Transverse colon (tissue), 4 donors: ENCODE measurements at regions of chr1 and their contacts with region 1.

Region 1: GRCh38 chr1:210292231-210292871 is 36.4 kb upstream of the HHAT start:
- DNase-seq: peak; percentile 79
- H3K4me3 ChIP-seq: peak overlapping the region; percentile 30 to 56 (median 38)
- H3K27ac ChIP-seq: peak overlapping the region; percentile 58 to 87 (median 72)
- H3K4me1 ChIP-seq: peaks cover 16 to 41% (median 22%) of the 10 kb centered on the region in 4 donors
- H3K27me3 ChIP-seq: peaks cover 28% of the 10 kb centered on the region
- CTCF ChIP-seq: peak in 3 of 5 experiments; percentile 29 to 35 (median 30)
- EP300 ChIP-seq: no peak
- POLR2A ChIP-seq: no peak

Region 2: GRCh38 chr1:210239349-210240111 is 52.8 kb before region 1 on chr1:
- in situ Hi-C with region 1: no loop called
- intact Hi-C with region 1: loop called (anchors 5 kb)
- DNase-seq: no peak
- H3K4me3 ChIP-seq: no peak overlapping the region
- H3K27ac ChIP-seq: peak overlapping the region in 3 of 4 donors; percentile 27 to 90 (median 90)
- H3K4me1 ChIP-seq: peaks cover 0 to 47% (median 11%) of the 10 kb centered on the region in 4 donors
- H3K27me3 ChIP-seq: no peaks in the 10 kb centered on the region
- CTCF ChIP-seq: peak; percentile 38 to 54 (median 41)
- EP300 ChIP-seq: no peak
- POLR2A ChIP-seq: no peak

Region 3: DNA sequence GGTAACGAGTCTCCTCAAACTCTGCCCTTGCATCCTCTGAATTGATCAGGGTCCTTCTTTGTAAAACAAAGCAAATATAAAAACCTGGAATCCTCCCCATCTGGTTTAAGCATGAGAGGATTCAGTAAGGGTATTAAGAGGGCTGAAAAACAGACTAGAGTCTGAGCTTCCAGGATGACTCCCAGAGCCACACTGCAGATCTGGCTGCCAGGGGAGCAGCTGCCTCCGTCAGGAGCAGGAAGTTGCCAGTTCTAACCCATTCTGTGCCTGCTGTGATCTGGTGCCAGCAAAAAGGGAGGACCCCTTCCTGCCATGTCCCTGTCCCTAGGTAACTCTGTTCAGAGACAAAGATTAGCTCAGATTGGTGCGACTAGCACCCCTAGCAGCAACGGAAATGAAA is 32.3 kb before region 1 on chr1:
- in situ Hi-C with region 1: no loop called
- intact Hi-C with region 1: loop called (anchors 1 kb)
- DNase-seq: no peak
- H3K4me3 ChIP-seq: no peak overlapping the region
- H3K27ac ChIP-seq: peak overlapping the region in 1 of 4 donors; percentile 11
- H3K4me1 ChIP-seq: peaks cover 4 to 16% (median 6%) of the 10 kb centered on the region in 4 donors
- H3K27me3 ChIP-seq: no peaks in the 10 kb centered on the region
- CTCF ChIP-seq: no peak
- EP300 ChIP-seq: no peak
- POLR2A ChIP-seq: no peak

Region 4: DNA sequence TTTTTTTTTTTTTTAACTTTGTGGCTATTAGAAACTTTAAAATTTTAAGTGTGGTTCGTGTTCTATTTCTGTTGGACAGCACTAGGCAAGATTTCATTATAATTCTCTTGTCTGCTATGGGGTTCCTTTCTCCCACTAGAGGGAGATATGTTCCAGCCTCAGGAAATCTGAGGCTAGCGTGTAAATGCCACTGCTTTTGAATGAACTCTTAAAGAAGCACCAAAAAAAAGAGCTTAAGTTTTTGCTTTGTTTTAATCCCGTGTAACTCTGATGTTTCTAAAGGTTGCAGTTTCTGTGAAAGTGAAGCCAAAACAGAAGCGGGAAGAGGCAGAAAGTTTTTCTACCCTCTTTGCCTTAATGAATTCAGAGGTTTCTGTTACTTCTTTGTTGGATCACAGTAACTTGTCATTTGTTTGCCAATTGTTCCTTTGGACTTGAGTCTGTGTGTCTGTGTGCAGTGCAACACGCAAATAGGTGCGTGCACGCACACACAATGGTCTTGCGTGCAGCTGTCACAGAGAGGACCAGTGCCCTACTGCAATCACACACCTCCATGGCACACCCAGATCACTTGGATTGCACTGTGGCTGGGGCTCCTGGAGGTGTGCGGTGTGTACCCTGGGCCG is 68.6 kb after region 1 on chr1:
- in situ Hi-C with region 1: no loop called
- intact Hi-C with region 1: no loop called
- DNase-seq: no peak
- H3K4me3 ChIP-seq: no peak overlapping the region
- H3K27ac ChIP-seq: no peak overlapping the region
- H3K4me1 ChIP-seq: peaks cover 0 to 10% (median 7%) of the 10 kb centered on the region in 4 donors
- H3K27me3 ChIP-seq: no peaks in the 10 kb centered on the region
- CTCF ChIP-seq: peak; percentile 29 to 62 (median 57)
- EP300 ChIP-seq: no peak
- POLR2A ChIP-seq: no peak